Activated CD4-positive, alpha-beta T cell treated with anti-CD3 and anti-CD28 coated beads for 36 hours (primary cell): ENCODE measurements at regions of chr1 and their contacts with region 1.

Region 1: GRCh38 chr1:52102336-52103013 is 39.4 kb upstream of the ZFYVE9 start:
- DNase-seq: no peak
- ATAC-seq: peak; percentile 39
- H3K4me3 Mint-ChIP-seq: no peak overlapping the region
- H3K27ac Mint-ChIP-seq: no peak overlapping the region
- H3K4me1 Mint-ChIP-seq: peaks cover 7% of the 10 kb centered on the region
- H3K27me3 Mint-ChIP-seq: no peaks in the 10 kb centered on the region

Region 2: DNA sequence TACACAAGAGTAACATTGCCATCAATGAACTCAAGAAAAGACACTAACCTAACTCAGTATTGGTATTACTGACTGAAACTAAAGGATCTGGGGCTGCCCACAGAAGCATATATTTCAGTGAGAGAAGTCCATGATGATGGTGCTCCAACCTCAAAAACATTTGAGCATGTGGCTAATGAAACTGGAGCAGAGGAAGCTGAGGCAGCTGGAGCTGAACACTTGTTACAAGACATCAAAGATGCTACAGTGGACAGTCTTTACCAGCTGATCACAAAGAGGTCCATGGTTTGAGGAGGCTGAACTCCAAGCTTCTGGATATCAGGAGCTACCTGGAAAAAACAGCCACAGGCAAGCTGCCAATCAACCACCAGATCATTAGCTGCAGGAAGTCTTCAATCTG is 729.9 kb before region 1 on chr1:
- CTCF ChIA-PET with region 1: no interaction called
- POLR2A ChIA-PET with region 1: no interaction called
- intact Hi-C with region 1: loop called in 1 of 2 experiments (anchors 10 kb)
- DNase-seq: no peak
- ATAC-seq: no peak
- H3K4me3 Mint-ChIP-seq: no peak overlapping the region
- H3K27ac Mint-ChIP-seq: no peak overlapping the region
- H3K4me1 Mint-ChIP-seq: no peaks in the 10 kb centered on the region
- H3K27me3 Mint-ChIP-seq: no peaks in the 10 kb centered on the region

Region 3: DNA sequence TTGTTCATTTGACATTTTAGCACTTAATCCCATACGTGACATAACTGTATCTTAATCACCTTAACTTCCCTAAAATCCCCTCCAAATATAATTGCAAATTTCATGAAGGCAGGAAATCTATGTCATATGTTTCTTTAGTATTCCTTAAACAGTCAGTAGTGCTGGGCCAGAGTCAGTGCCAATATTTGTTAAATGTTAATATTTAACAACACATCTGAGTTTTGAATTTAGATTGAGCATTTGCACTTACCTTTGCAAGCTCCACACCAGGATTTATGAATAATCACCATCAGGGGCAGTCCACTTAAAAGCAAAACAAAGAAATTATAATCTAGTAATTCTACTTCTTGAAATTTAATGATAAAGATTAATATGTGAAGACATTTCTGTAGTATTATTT is 74.1 kb before region 1 on chr1:
- CTCF ChIA-PET with region 1: no interaction called
- POLR2A ChIA-PET with region 1: no interaction called
- intact Hi-C with region 1: no loop called
- DNase-seq: no peak
- ATAC-seq: no peak
- H3K4me3 Mint-ChIP-seq: no peak overlapping the region
- H3K27ac Mint-ChIP-seq: no peak overlapping the region
- H3K4me1 Mint-ChIP-seq: peaks cover 25% of the 10 kb centered on the region
- H3K27me3 Mint-ChIP-seq: no peaks in the 10 kb centered on the region